Ovary (tissue), 10 donors: ENCODE measurements at regions of chr2 and their contacts with region 1.

Region 1: GRCh38 chr2:29196792-29197788 is 81.9 kb downstream of the CLIP4 start:
- DNase-seq: peak; percentile 60 to 79 (median 73)
- H3K4me3 ChIP-seq: no peak overlapping the region
- H3K27ac ChIP-seq: no peak overlapping the region
- H3K4me1 ChIP-seq: no peaks in the 10 kb centered on the region
- H3K27me3 ChIP-seq: no peaks in the 10 kb centered on the region
- CTCF ChIP-seq: peak; percentile 47 to 76 (median 74)
- EP300 ChIP-seq: no peak
- POLR2A ChIP-seq: no peak

Region 2: DNA sequence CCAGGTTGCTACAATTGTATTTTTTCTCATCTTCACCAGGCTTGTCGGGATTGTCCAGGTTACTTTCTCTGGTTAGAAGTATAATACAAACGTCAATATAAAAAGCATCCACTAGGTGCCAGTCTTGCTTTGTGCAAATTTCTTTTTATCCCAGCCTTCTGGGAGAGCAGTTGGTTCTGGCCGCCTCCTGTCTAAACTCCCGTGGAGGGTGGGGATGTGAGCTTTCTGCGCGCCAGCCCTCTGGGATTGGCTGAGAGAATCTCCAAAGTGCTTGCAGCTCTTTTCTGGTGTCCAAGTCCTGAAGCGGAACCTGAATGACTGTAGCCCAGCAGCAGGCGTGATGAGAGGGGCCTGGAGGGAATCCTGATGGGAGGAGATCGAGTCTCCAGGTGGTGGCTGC is 238.4 kb before region 1 on chr2:
- intact Hi-C with region 1: loop called (anchors 2 to 5 kb)
- DNase-seq: peak; percentile 68 to 74 (median 72)
- H3K4me3 ChIP-seq: no peak overlapping the region
- H3K27ac ChIP-seq: no peak overlapping the region
- H3K4me1 ChIP-seq: no peaks in the 10 kb centered on the region
- H3K27me3 ChIP-seq: no peaks in the 10 kb centered on the region
- CTCF ChIP-seq: peak; percentile 66 to 73 (median 70)
- EP300 ChIP-seq: no peak
- POLR2A ChIP-seq: no peak

Region 3: GRCh38 chr2:29042561-29043075 is 154.5 kb before region 1 on chr2:
- intact Hi-C with region 1: loop called in 1 of 4 experiments (anchors 10 kb)
- DNase-seq: peak; percentile 74 to 88 (median 83)
- H3K4me3 ChIP-seq: no peak overlapping the region
- H3K27ac ChIP-seq: peak overlapping the region in 1 of 2 donors; percentile 43
- H3K4me1 ChIP-seq: peaks cover 13% of the 10 kb centered on the region
- H3K27me3 ChIP-seq: no peaks in the 10 kb centered on the region
- CTCF ChIP-seq: no peak
- EP300 ChIP-seq: no peak
- POLR2A ChIP-seq: no peak